Gastrocnemius medialis (tissue), 4 donors: ENCODE measurements at regions of chr2 and their contacts with region 1.

Region 1: GRCh38 chr2:69643602-69644505 is at the start of gene AAK1:
- DNase-seq: peak; percentile 81 to 85
- ATAC-seq: peak; percentile 80 to 89
- H3K4me3 ChIP-seq: peak within 1 kb of the TSS; percentile 89 to 98 (median 94)
- H3K27ac ChIP-seq: peak within 1 kb of the TSS; percentile 94 to 99 (median 96)
- H3K4me1 ChIP-seq: peaks cover 40 to 51% of the 10 kb centered on the region in 2 donors
- H3K27me3 ChIP-seq: no peaks in the 10 kb centered on the region
- CTCF ChIP-seq: peak in 2 of 5 experiments; percentile 24 to 40
- POLR2A ChIP-seq: peak; percentile 94
- total RNA-seq, gene AAK1: 30.0 to 47.3 (median 39.1) TPM

Region 2: DNA sequence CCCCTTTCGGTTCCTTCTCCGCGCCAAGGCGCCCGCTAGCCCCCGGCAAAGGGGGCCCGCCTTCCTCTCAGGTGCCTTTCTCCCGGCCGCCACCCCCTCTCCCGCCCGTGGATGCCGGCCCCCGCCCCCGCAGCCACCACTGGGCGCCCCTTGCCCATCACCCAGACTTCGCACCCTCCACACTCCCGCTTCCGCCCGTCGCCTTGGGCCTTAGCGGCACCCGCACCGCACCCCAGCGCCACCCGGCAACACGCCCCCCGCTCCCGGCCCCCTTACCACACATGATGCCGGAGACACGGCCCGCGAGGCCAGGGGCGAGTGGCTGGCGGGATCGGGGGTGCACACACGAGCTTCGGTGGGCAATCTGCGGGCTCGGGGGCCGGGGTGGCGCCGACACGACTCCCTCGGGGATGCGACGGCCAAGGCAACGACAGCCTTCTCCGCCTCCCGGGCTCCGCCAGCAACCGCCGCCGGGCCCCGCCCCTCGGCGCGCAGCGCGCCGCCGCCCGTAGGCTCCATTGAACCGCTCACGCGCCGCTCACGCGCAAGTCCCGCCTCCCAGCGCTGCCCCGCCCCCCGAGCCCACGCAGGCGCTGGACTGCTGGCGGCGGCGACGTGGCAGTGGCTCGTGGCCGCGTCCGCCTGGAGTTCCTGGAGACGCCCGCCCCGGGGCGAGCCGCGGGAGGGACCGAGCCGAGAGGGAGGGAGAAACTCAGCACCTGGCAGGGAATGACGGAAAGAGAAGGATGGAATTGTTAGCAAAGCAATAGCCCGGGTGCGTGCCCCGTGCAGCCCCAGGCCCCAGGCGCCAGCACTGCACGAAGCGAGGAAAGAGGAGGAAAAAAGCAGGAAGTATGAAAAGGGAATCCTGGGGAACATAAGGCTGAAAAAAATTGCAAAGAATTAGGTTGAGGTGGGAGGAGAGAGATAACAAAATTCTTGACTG is 256.8 kb before region 1 on chr2 and contains the start of gene GFPT1:
- in situ Hi-C with region 1: no loop called
- intact Hi-C with region 1: loop called (anchors 5 kb)
- DNase-seq: peak; percentile 86 to 91
- ATAC-seq: peak; percentile 93 to 95
- H3K4me3 ChIP-seq: peak within 1 kb of the TSS; percentile 77 to 93 (median 81)
- H3K27ac ChIP-seq: peak within 1 kb of the TSS; percentile 80 to 83 (median 82)
- H3K4me1 ChIP-seq: peaks cover 18 to 21% of the 10 kb centered on the region in 2 donors
- H3K27me3 ChIP-seq: no peaks in the 10 kb centered on the region
- CTCF ChIP-seq: no peak
- POLR2A ChIP-seq: peak; percentile 71 to 79
- total RNA-seq, gene GFPT1: 12.2 to 31.4 (median 14.8) TPM

Region 3: DNA sequence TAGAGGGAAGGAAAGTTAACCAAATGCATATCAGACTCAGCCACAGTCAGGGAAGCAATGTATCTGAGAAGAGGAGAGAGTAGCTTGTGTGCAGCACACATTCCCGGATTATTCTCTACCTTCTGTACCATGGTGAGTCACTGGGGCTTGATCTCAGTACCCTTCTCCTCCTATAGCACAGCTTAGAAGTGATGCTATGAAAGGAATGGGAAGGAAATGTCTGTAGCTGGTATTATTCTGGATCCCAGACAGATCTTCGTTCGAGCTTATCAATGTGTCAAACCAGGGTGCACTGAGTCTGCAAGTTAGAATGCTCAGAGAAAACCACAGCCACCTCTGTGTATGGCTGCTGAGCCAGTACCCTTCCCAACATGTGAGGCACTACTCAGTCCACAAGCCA is 118.6 kb before region 1 on chr2:
- in situ Hi-C with region 1: no loop called
- intact Hi-C with region 1: no loop called
- DNase-seq: no peak
- ATAC-seq: no peak
- H3K4me3 ChIP-seq: no peak overlapping the region
- H3K27ac ChIP-seq: no peak overlapping the region
- H3K4me1 ChIP-seq: no peaks in the 10 kb centered on the region
- H3K27me3 ChIP-seq: no peaks in the 10 kb centered on the region
- CTCF ChIP-seq: no peak
- POLR2A ChIP-seq: no peak

Region 4: DNA sequence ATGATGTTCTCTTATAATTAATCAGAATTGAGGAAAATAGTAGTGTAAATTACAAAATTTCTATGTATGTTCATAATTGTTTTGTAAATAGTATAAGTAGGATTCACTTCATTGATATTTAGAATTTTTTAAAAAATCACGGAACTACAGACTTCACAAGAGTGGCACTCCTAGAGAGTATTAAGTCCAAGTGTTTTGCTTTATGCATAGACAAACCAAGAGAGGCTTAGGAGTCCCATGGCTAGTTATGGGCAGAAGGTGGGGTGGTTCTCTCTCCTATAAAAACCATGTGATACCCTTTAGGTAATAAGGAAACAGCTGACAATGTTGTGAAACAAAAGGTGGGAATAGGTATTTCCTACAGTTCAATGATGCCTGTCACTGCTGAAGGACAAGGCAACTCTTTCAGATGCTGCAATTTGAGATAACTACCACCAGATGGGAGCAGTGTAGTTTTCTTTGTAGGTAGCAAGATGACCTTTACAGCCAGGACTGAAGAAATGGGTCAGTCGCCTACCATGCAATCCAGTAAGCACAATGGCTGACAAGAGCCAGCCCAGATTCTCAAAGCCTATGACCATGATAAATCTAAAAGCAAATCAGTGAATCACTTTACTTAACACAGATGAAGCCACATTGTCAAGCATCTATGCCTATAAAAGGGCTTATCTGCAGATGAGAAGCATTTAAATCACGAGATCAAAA is 84.3 kb before region 1 on chr2:
- in situ Hi-C with region 1: loop called (anchors 5 to 10 kb)
- intact Hi-C with region 1: loop called (anchors 1 kb)
- DNase-seq: peak in 1 of 2 donors; percentile 53
- ATAC-seq: peak; percentile 95 to 97
- H3K4me3 ChIP-seq: no peak overlapping the region
- H3K27ac ChIP-seq: peak overlapping the region in 3 of 4 donors; percentile 10 to 33 (median 11)
- H3K4me1 ChIP-seq: peaks cover 20 to 54% of the 10 kb centered on the region in 2 donors
- H3K27me3 ChIP-seq: no peaks in the 10 kb centered on the region
- CTCF ChIP-seq: peak; percentile 75 to 85 (median 78)
- POLR2A ChIP-seq: no peak

Region 5: DNA sequence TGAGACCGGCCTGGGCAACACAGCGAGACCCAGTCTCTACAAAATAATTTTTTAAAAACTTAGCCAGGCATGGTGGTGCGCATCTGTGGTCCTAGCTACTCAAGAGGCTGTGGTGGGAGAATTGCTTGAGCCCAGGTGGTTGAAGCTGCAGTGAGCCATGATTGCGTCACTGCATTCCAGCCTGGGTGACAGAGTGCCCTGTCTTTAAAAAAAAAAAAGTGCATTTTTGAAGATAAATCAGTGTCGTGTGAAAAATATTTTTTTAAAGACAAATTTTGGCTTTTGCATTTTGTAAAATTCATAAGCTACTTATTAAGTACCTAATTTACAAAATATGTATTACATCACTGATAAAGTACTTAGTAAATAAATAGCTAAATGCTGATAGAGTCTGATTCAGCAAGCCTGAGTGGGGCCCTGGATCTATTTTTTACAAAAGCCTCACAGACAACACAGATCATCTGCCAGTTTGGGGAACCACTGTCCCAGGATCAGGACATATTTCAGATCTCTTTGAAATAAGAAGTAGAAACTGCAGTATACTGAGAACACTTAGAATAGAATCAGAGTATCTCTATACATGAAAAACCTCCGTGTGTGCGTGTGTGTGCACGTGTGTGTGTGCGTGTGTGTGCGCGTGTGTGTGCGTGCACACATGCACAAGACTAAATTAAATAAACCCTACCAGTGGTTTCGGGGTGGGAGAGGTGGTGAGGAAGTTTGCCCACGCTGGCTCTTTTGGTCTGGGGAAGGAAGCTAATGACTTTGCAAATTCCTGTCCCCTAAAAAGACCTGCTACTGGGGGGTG is 61.9 kb before region 1 on chr2:
- in situ Hi-C with region 1: no loop called
- intact Hi-C with region 1: loop called (anchors 5 kb)
- DNase-seq: no peak
- ATAC-seq: no peak
- H3K4me3 ChIP-seq: no peak overlapping the region
- H3K27ac ChIP-seq: peak overlapping the region; percentile 56 to 72 (median 59)
- H3K4me1 ChIP-seq: peaks cover 69 to 78% of the 10 kb centered on the region in 2 donors
- H3K27me3 ChIP-seq: no peaks in the 10 kb centered on the region
- CTCF ChIP-seq: no peak
- POLR2A ChIP-seq: no peak

Region 6: DNA sequence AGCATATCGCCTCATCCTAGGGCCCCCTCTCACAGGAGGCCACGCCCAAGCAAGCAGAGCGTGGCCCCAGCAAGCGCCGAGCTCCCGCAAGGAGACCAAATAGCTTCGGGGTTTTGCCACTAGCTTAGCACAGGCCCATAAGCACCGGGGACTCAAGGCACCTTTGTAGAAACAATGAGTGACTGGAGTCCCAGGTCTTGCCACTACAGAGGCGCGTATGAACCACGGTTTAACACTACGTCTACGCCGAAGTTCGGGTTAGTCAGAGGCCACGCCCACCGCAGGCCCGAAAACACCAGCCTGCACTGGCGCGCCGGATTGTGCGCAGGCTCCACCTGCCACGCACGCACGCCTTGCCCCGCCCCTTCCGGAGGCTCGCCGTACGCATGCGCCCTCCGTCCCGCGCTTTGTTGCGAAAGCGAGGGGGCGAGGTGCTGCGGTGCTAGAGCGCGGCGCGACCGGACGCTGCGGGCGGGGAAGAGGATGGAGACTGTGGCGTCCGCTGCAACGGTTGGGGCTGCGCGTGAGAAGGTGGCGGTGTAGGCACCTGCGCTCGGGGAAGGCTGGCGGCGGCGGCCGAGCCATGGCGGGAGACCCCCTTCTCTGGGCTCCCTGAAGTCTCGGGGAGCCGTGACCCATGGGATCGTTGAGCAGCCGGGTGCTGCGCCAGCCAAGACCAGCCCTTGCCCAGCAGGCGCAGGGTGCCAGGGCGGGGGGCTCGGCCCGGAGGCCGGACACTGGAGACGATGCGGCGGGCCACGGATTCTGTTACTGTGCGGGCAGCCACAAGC is 185.6 kb after region 1 on chr2 and contains the start of gene GMCL1:
- in situ Hi-C with region 1: no loop called
- intact Hi-C with region 1: loop called (anchors 10 kb)
- DNase-seq: peak; percentile 93 to 95
- ATAC-seq: peak; percentile 96
- H3K4me3 ChIP-seq: peak within 1 kb of the TSS; percentile 70 to 99 (median 94)
- H3K27ac ChIP-seq: peak within 1 kb of the TSS; percentile 88 to 93 (median 90)
- H3K4me1 ChIP-seq: peaks cover 14 to 25% of the 10 kb centered on the region in 2 donors
- H3K27me3 ChIP-seq: no peaks in the 10 kb centered on the region
- CTCF ChIP-seq: no peak
- POLR2A ChIP-seq: peak; percentile 62 to 74
- total RNA-seq, gene GMCL1: 2.0 to 3.3 (median 3.3) TPM